ENCODE measurements at regions of chr1 and their contacts with region 1.

Region 1: DNA sequence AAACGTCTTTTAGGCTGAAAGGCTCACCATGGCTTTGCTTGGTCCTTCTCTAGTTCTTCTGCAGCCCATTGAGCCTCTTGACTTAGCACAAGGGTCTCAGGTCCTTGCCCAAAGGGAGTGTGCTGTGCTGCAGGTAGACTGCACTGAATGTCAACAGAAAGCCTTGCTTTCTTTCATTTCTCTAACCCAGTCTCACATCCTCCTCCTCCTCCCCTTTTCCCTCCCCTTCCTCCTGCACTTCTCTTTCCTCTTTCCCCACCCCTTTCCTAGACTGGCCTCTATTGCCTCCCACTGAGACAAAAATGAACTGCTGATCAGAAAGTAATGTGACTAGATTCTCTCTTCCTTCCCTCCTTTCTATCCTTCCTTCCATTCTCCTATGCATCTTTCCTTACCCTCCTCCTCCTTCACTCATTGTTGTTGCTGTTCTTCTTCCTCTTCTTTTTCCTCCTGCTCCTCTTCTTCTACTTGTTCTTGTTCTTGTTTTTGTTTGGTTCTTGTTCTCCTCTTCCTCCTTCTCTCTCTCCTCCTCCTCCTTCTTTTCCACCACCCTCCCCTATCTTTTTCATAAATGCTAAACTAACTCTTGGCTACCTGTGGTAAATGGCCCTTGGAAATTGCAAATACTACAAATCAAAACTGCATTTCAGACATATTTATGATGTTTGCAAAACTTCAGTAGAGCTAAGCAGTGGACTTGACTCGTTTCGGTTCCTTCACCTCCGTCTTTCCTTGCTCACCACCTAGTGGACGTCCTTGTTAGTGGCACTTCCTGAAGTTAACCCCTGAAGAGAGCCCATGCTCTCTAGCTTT is at the start of gene SELL:
- DNase-seq: peak; percentile 71
- ATAC-seq: peak; percentile 99
- H3K4me3 ChIP-seq: peak within 1 kb of the TSS; percentile 23 to 43 (median 39); a peak in 4 of 6 replicates
- H3K27ac ChIP-seq: no peak within 1 kb of the TSS
- H3K4me1 ChIP-seq: peaks cover 10% of the 10 kb centered on the region
- H3K27me3 ChIP-seq: no peaks in the 10 kb centered on the region; a peak in 1 of 5 replicates
- CTCF ChIP-seq: peak; percentile 80
- EP300 ChIP-seq: no peak
- POLR2A ChIP-seq: no peak
- RAD21 ChIP-seq: peak; percentile 58
- total RNA-seq, gene SELL: 0.13 and 0.32 TPM in 2 replicates

Region 2: DNA sequence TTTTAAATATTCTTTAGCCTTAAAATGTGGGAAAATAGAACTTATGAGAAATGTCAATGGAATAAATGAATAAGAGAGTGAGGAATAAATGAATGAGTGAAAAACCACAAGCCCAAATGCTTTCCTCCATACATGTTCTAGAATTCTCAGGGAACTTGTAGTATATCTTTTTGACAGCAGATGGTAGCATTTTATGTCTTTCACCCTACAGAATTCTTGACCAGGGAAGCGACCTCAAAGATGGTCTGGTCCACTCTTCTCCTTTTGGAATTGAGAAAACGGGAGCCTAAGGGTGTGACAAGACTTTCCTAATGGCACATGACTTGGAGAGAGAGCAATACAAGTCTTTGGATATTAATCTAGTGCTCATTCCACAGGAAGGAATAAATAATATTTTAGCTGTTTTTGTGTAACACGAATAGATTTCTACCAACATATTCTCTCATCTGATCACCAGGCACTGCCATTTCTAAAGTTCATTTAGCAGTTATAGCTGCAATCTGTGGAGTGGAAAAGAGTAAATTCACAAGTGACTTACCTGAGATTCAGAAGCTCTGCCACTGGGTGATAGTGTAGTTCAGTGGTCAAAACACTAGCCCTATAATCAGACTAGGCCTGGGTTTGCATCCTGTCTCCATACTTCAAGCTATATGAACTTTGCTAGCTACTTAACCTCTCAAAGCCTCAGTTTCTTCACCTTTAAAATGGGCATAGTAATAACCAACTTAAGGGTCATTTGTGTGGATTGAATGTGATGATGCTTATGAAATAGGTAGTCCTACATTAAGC is 110.4 kb before region 1 on chr1:
- CTCF ChIA-PET with region 1: interaction called, 6 read pairs
- POLR2A ChIA-PET with region 1: no interaction called
- in situ Hi-C with region 1: loop called (anchors 5 kb)
- intact Hi-C with region 1: loop called (anchors 1 kb)
- DNase-seq: peak; percentile 30
- ATAC-seq: peak; percentile 65; the same call in 2 of the 3 replicates
- H3K4me3 ChIP-seq: no peak overlapping the region
- H3K27ac ChIP-seq: no peak overlapping the region
- H3K4me1 ChIP-seq: peaks cover 12% of the 10 kb centered on the region
- H3K27me3 ChIP-seq: no peaks in the 10 kb centered on the region
- CTCF ChIP-seq: peak; percentile 69
- EP300 ChIP-seq: no peak
- POLR2A ChIP-seq: no peak
- RAD21 ChIP-seq: 0 out of 2 replicates have a peak, but pooled peaks have one; percentile 30

Region 3: DNA sequence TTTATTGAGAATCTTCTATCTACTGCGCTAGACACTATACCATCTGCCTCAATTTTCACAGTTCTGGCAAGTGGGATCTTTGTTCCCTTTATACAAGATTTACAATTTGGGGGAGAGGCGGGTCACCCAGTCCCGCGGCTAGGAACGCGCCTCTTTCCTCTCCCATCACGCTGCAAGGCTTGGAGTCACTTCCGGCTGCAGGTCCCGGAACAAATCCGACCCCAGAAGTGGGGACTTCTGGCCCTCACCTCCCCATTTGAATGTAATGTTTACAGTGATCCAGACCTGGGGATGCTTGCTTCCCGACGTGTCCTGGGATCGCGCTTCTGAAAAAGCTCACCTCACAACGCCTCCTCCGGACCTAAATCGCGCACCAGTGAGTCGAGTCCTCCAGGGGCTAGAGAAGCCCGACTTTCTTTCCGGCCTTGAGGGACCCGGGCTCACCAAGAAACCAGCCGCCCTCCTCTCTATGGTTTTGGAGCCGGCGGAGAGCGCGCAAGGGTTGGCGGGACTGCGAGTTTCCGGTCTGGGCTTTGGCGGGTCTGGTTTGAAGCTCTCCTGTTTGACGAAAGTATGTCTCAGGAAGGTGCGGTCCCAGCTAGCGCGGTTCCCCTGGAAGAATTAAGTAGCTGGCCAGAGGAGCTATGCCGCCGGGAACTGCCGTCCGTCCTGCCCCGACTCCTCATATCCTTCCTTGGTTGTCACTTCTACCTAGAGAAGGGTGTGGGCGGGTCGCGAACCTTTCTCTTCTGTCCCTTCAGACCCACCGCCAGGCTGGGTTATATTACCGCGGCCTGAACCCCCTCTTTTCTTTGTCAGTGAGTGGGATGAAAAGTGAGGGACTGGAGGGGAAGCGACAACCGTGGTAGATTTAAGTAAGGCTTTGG is 83.1 kb after region 1 on chr1 and contains the start of gene METTL18:
- CTCF ChIA-PET with region 1: no interaction called
- POLR2A ChIA-PET with region 1: no interaction called
- in situ Hi-C with region 1: no loop called
- intact Hi-C with region 1: loop called (anchors 5 kb)
- DNase-seq: peak; percentile 90
- ATAC-seq: peak; percentile 99
- H3K4me3 ChIP-seq: peak within 1 kb of the TSS; percentile 82 to 88 (median 84)
- H3K27ac ChIP-seq: peak within 1 kb of the TSS; percentile 80
- H3K4me1 ChIP-seq: peaks cover 35% of the 10 kb centered on the region
- H3K27me3 ChIP-seq: no peaks in the 10 kb centered on the region
- CTCF ChIP-seq: no peak
- EP300 ChIP-seq: peak in 1 of 2 experiments; percentile 49; a peak in 1 of 4 replicates
- POLR2A ChIP-seq: peak; percentile 64 to 67
- RAD21 ChIP-seq: peak; percentile 8; the same call in 1 of the 2 replicates
- total RNA-seq, gene METTL18: 6.7 and 11.2 TPM in 2 replicates

Region 4: GRCh38 chr1:169814265-169814664 is 102.6 kb after region 1 on chr1:
- CTCF ChIA-PET with region 1: no interaction called
- POLR2A ChIA-PET with region 1: no interaction called
- in situ Hi-C with region 1: no loop called
- intact Hi-C with region 1: no loop called
- DNase-seq: no peak
- ATAC-seq: no peak
- H3K4me3 ChIP-seq: no peak overlapping the region
- H3K27ac ChIP-seq: no peak overlapping the region
- H3K4me1 ChIP-seq: no peaks in the 10 kb centered on the region
- H3K27me3 ChIP-seq: no peaks in the 10 kb centered on the region
- CTCF ChIP-seq: no peak
- EP300 ChIP-seq: no peak
- POLR2A ChIP-seq: no peak
- RAD21 ChIP-seq: no peak